Activated T-helper 1 cell treated with anti-CD3 and anti-CD28 coated beads, Interleukin-12 subunit alpha, Interleukin-12 subunit beta, Interleukin-2, Interleukin-4 antibody, amounts not matched to agents 30 ng/mL and 10 ng/mL and 1 ng/mL, durations not matched to agents 14 hours and 24 hours and 36 hours (primary cell): ENCODE measurements at regions of chr3 and their contacts with region 1.

Region 1: GRCh38 chr3:64533617-64534317 is 154.0 kb downstream of the ADAMTS9 start:
- DNase-seq: peak; percentile 9
- H3K4me3 Mint-ChIP-seq: no peak overlapping the region
- H3K27ac Mint-ChIP-seq: no peak overlapping the region
- H3K4me1 Mint-ChIP-seq: no peaks in the 10 kb centered on the region
- H3K27me3 Mint-ChIP-seq: peaks cover 6% of the 10 kb centered on the region

Region 2: GRCh38 chr3:64509206-64509605 is 24.6 kb before region 1 on chr3:
- intact Hi-C with region 1: no loop called
- DNase-seq: no peak
- H3K4me3 Mint-ChIP-seq: no peak overlapping the region
- H3K27ac Mint-ChIP-seq: no peak overlapping the region
- H3K4me1 Mint-ChIP-seq: peaks cover 5% of the 10 kb centered on the region
- H3K27me3 Mint-ChIP-seq: peaks cover 5% of the 10 kb centered on the region

Region 3: DNA sequence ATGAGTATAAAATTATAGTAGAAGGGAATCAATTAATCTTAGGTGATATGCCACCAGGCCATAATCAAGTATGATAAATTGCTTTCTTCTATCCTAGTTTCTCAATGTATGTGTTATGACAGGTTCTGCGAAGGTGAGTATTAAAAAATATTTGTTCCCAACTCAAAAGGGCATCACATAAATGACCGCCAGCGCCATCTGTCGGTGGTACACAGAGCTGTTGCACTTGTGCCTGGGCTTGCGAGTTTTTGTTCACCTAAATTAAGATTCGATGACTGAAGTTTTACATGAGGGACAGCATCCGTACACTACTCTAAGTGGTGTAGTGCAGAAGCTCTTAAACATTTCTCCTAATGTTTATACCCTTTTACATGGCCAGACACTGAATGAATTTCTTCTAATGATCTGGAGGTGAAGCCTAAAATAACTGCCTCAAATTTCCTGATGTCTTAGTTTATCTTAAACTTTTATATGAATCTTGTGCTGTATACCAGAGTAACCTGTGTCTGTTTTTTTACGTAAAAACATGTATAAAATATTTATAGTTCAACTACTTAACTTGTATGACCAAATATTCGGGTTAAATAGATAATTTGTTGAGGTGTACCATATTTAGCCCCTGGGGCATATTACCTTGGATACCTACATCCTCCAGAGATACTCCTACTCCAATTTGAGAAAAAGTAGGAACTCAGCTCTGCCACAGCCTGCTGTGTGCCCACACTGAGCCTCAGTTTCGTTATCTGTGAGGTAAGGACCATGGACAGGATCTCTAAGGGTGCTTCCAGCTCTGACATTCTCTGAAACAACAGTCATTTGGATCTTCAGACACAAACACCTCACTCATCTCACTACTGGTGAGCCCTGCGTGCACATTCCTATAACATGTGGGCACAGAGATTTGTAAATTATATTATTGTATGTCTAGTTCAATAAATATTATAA is 1139.4 kb after region 1 on chr3:
- intact Hi-C with region 1: loop called (anchors 5 kb)
- DNase-seq: no peak
- H3K4me3 Mint-ChIP-seq: no peak overlapping the region
- H3K27ac Mint-ChIP-seq: no peak overlapping the region
- H3K4me1 Mint-ChIP-seq: no peaks in the 10 kb centered on the region
- H3K27me3 Mint-ChIP-seq: no peaks in the 10 kb centered on the region